ENCODE measurements at regions of chr6 and their contacts with region 1.

Region 1: DNA sequence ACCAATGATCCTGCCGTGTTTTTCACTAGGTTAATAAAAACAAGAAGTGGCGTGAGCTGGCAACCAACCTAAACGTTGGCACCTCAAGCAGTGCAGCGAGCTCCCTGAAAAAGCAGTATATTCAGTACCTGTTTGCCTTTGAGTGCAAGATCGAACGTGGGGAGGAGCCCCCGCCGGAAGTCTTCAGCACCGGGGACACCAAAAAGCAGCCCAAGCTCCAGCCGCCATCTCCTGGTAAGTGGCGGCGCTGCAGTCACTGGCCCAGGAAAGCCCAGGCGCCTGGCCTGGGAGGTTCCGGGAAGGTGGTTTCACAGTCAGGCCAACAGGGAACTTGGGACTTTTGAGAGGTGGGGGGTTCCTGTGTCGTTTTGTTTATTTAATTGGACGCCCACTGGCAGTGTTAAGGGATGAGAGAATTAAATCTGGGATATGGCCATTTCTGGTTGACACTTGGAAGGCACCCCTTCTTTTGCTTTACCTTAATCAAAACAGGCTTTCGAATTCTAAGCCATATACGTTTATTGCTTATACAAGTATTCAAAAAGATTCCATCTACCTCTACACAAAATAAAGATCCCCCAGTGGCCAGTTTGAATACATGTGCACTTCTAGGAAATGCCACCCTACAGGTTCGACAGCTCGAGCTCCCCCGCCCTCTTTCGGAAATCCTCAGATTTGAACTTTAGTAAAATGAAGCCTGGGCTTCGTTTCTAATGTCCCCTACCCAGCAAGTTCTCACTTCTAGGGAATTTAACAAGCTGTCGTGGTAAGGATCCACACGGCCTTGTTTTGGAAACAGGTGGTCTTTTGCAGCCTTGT is 138.9 kb downstream of the TMEM242 start:
- DNase-seq: peak; percentile 46
- H3K4me3 Mint-ChIP-seq: no peak overlapping the region
- H3K27ac Mint-ChIP-seq: peak overlapping the region; percentile 21
- H3K4me1 Mint-ChIP-seq: peaks cover 6% of the 10 kb centered on the region
- H3K27me3 Mint-ChIP-seq: no peaks in the 10 kb centered on the region

Region 2: GRCh38 chr6:156949376-156949775 is 235.0 kb before region 1 on chr6:
- intact Hi-C with region 1: no loop called
- DNase-seq: no peak
- H3K4me3 Mint-ChIP-seq: no peak overlapping the region
- H3K27ac Mint-ChIP-seq: no peak overlapping the region
- H3K4me1 Mint-ChIP-seq: peaks cover 30% of the 10 kb centered on the region
- H3K27me3 Mint-ChIP-seq: no peaks in the 10 kb centered on the region

Region 3: GRCh38 chr6:157034436-157035230 is 149.8 kb before region 1 on chr6:
- intact Hi-C with region 1: loop called (anchors 1 kb)
- DNase-seq: no peak
- H3K4me3 Mint-ChIP-seq: peak overlapping the region; percentile 49
- H3K27ac Mint-ChIP-seq: no peak overlapping the region
- H3K4me1 Mint-ChIP-seq: peaks cover 21% of the 10 kb centered on the region
- H3K27me3 Mint-ChIP-seq: no peaks in the 10 kb centered on the region

Region 4: DNA sequence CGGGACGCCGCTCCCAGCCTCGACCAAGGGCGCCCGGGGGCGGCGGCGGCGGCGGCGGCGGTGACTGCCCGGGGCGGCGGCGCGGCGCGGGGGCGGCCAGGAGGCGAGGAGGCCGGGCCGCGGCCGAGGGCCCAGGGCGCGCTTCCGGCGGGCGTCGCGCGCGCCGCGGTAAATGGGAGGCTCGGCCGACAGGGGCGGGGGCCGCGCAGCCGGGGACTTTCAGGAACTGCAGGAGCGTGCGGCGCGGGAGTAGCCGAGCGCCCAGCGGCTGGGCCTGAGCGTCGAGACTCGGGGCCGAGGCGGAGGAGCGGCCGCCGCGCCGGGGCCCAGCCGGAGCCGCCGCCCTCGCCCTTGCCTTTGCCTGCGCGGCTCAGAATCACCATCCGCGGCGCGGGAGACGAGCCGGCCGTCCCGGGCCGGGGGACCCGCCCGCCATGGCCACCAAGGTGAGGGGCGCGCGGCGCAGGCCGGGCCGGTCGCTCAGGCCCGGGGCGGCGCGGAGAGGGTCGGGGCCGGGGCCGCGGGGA is 638.7 kb after region 1 on chr6 and contains the start of gene SNX9:
- intact Hi-C with region 1: no loop called
- DNase-seq: peak; percentile 42
- H3K4me3 Mint-ChIP-seq: peak within 1 kb of the TSS; percentile 92
- H3K27ac Mint-ChIP-seq: peak within 1 kb of the TSS; percentile 96
- H3K4me1 Mint-ChIP-seq: peaks cover 30% of the 10 kb centered on the region
- H3K27me3 Mint-ChIP-seq: peaks cover 35% of the 10 kb centered on the region
- total RNA-seq, gene SNX9: 55.3 and 55.6 TPM in 2 replicates

Measured in activated T-helper 2 cell treated with anti-CD3 and anti-CD28 coated beads, Interferon-gamma antibody, Interleukin-2, Interleukin-4, amounts not matched to agents 10 μg/mL and 5 μg/mL and 100 μg/mL, durations not matched to agents 14 hours and 24 hours and 36 hours (primary cell).